Naive thymus-derived CD8-positive, alpha-beta T cell (primary cell): ENCODE measurements at regions of chr2 and their contacts with region 1.

Region 1: DNA sequence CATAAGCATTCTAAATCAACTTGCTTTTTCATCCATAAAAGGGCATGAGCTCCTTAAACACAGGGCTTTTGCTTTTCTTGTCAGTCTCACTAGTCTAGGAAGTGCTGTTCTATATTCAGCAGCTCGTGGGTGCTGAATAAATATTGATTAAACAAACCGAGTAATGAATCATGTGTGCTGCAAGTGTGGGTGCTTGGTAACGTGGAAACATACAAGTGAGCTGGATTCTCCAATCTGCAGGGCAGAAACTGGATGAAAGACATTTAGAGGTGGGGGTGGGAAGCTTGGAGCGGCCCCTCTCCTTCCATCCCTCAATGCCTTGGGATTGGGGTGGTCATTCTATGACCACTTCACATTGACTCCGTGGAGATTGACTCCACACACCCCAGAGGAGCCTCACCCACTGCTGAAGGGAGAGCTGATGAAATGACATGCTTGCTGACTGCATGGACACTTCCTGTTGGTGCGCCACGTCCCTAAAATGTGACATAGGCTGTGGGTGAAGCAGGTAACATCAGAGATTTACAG is 114.6 kb downstream of the DOCK10 start:
- DNase-seq: peak; percentile 36 to 93 (median 78)
- ATAC-seq: peak; percentile 68 to 88
- H3K4me3 Mint-ChIP-seq: peak overlapping the region; percentile 49 to 81 (median 70)
- H3K27ac Mint-ChIP-seq: peak overlapping the region; percentile 92 to 99 (median 97)
- H3K4me1 Mint-ChIP-seq: peaks cover 58 to 100% (median 98%) of the 10 kb centered on the region in 4 donors
- H3K27me3 Mint-ChIP-seq: no peaks in the 10 kb centered on the region

Region 2: DNA sequence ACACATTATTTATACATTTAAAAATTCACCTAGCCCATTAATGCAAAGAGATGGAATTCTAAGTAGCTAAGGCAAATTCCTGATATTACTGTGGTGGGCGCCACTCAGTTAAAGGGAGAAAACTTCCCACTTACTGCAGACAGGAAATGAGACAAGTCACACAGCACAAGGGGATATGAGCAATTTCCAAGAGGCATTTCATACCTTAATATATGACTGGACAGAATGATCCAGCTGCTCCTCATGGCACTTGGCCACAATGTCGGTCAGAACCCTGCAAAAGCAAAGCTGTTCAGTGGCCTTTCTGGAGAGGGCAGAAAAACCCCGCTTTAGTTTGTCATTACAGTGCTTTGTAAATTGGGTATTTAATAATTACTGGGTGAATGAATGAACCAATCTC is 90.2 kb before region 1 on chr2:
- POLR2A ChIA-PET with region 1: no interaction called
- DNase-seq: no peak
- ATAC-seq: no peak
- H3K4me3 Mint-ChIP-seq: no peak overlapping the region
- H3K27ac Mint-ChIP-seq: peak overlapping the region in 6 of 10 donors; percentile 6 to 49 (median 30)
- H3K4me1 Mint-ChIP-seq: peaks cover 0 to 5% (median under 1%) of the 10 kb centered on the region in 4 donors
- H3K27me3 Mint-ChIP-seq: no peaks in the 10 kb centered on the region

Region 3: DNA sequence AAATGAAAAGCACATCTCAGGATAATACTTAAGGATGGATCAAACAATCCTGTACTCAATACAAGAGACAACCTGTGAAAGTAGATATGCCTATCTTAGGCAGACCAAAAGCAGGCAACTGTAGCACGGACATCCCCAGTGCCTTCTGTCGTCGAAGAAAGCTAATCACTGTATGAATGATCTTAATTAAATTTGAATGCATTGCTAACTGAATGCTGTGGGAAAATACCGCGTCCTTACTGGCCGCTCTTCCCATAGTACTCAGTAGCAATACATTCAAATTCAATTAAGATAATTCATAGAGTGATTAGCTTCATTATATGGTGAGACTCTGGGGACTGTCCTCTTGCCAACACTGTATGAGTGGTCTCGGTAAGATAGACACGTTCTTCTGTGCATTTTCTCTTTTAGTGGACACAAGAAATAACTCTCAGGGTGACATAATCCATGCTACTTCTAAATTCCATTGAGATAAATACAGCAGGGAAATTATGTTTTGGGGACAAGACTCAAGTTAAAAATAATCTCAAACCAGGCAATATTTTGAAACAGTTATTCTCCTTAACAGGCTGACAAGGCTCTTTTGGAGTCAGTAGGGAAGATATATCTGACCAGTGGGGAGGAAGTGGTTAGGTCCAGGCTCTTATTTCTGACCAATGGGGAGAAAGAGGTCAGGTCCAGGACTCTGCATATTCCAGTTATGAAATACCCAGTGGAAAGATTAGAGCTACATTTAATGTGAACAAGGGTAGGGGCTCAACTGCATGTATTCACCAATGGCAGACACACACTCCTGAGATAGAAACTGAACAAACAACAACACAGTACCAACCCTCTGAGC is 17.2 kb after region 1 on chr2:
- POLR2A ChIA-PET with region 1: interaction called, 10 read pairs
- DNase-seq: no peak
- ATAC-seq: no peak
- H3K4me3 Mint-ChIP-seq: peak overlapping the region; percentile 89 to 97 (median 94)
- H3K27ac Mint-ChIP-seq: peak overlapping the region; percentile 90 to 98 (median 94)
- H3K4me1 Mint-ChIP-seq: peaks cover 38 to 88% (median 77%) of the 10 kb centered on the region in 4 donors
- H3K27me3 Mint-ChIP-seq: no peaks in the 10 kb centered on the region

Region 4: GRCh38 chr2:224952936-224953657 is 25.4 kb after region 1 on chr2:
- POLR2A ChIA-PET with region 1: interaction called, 15 read pairs
- DNase-seq: peak in 8 of 10 donors; percentile 33 to 73 (median 49)
- ATAC-seq: peak; percentile 97 to 99
- H3K4me3 Mint-ChIP-seq: peak overlapping the region; percentile 36 to 80 (median 73)
- H3K27ac Mint-ChIP-seq: peak overlapping the region; percentile 47 to 95 (median 91)
- H3K4me1 Mint-ChIP-seq: peaks cover 42 to 93% (median 90%) of the 10 kb centered on the region in 4 donors
- H3K27me3 Mint-ChIP-seq: no peaks in the 10 kb centered on the region